Right ventricle myocardium inferior (tissue), 1 donor: ENCODE measurements at regions of chr5 and their contacts with region 1.

Region 1: DNA sequence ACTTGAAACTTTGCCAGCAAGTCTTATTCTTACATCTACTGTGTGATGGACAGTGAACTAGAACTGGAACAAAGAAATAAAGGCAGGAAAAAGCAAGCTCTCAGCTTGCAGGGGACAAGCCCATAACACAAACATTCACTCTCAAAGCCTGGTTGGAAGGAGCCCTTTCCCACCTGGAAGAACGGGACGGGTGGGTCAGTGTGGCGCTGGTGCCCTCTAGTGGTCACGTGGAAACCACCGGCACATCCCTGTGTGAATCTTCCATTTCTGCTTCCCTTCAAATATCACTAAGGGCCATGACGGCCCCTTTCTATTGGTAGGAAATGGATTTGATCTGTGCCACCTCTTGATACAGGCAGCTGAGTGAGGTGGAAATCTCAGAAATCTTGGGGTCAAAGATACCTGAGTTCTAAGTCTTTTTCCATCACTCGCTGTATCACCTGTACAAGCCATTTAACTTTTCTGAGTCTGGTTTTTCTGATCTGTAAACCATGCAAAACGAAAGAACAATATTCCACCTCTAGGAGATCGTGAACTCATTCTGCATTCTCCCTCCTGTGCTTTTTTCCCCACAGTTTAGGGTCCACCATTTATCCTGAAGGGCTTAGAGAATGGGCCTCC is 211.6 kb downstream of the MSX2 start:
- DNase-seq: no peak
- ATAC-seq: peak; percentile 40

Region 2: GRCh38 chr5:174424219-174425053 is 511.5 kb before region 1 on chr5:
- intact Hi-C with region 1: loop called (anchors 5 kb)
- DNase-seq: no peak
- ATAC-seq: no peak

Region 3: DNA sequence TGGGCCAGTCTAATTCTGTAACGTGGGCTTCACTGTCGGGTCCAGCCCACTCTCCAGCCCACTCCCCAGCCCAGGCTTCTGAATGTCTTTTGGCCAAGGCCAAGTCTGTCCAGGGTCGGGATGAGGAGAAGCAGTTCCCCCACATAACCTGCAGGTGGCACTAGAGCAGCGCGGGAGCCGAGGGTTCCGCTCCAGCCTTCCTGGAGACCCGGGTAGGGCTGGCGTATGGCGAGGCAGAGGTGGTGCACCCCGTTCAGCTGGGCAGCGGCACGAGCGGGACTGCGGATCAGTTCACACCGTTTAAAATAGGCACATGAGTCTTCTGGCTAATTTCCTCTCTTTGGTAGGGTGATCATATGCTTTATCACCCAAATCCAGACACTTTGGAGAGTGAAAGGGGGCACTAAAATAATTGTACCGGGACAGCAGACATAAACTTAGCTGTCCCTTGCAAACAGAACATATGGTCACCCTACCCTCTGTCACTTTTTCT is 25.7 kb before region 1 on chr5:
- intact Hi-C with region 1: loop called (anchors 1 kb)
- DNase-seq: peak; percentile 77
- ATAC-seq: peak; percentile 88